ENCODE measurements at regions of chr5 and their contacts with region 1.

Region 1: DNA sequence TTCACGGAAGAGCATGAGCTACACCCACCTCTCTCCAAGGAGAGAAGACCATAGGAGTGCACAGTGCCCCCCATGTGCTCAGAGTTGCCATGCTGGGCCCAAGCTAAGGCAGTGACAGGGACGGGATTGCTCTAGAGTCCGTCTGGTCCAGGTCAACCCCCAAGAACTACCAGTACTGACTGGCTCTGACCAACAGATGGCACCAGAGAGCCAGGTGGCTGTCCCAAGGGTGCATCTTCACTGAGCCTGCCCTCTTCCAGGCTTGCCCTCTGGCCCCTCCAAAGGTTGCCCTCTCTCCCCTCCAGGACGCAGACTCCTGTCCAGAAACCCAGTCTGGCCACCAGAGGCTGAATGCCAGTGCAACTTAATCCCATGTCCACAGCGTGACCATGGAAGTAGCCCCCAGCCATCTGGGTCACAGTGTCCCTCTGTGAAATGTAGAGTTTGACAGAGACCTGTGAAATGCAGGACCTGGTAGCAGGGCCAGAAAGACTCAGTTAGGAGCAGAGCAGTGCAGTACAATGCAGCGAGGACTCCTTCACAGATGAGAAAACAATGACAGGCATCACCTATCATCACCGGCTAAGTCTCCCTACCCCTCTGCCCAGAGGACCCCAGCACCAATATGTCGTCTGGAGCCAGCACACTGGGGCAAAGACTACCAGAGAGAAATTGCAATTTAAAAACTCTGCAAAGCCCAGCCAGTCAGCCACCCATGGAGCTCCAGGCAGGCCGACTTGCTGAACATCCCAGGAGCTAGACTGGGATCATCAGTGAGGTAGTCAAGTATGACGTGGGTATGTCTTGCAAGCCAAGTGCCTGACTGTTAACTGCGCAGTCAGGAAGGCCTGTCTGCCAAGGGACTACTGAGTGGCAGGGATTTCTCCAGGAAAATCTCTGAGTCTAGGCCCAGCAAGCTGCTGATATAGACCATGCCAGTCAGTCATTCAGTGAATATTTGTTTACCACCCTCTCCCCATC is 7.7 kb upstream of the SKP1 start:
- DNase-seq: peak; percentile 64 to 84
- ATAC-seq: peak; percentile 91 to 94 (median 92)
- H3K4me3 ChIP-seq: no peak overlapping the region
- H3K27ac ChIP-seq: no peak overlapping the region
- H3K4me1 ChIP-seq: no peaks in the 10 kb centered on the region
- H3K27me3 ChIP-seq: no peaks in the 10 kb centered on the region
- CTCF ChIP-seq: peak; percentile 95

Region 2: GRCh38 chr5:134225618-134226440 is 41.4 kb after region 1 on chr5 and contains the start of gene PPP2CA:
- intact Hi-C with region 1: loop called in 1 of 2 experiments (anchors 5 kb)
- DNase-seq: peak; percentile 99 to 100
- ATAC-seq: peak; percentile 90 to 94 (median 92)
- H3K4me3 ChIP-seq: peak within 1 kb of the TSS; percentile 87
- H3K27ac ChIP-seq: peak within 1 kb of the TSS; percentile 100
- H3K4me1 ChIP-seq: peaks cover 43% of the 10 kb centered on the region
- H3K27me3 ChIP-seq: no peaks in the 10 kb centered on the region
- CTCF ChIP-seq: no peak
- total RNA-seq, gene PPP2CA: 107 to 140 (median 123) TPM

Region 3: DNA sequence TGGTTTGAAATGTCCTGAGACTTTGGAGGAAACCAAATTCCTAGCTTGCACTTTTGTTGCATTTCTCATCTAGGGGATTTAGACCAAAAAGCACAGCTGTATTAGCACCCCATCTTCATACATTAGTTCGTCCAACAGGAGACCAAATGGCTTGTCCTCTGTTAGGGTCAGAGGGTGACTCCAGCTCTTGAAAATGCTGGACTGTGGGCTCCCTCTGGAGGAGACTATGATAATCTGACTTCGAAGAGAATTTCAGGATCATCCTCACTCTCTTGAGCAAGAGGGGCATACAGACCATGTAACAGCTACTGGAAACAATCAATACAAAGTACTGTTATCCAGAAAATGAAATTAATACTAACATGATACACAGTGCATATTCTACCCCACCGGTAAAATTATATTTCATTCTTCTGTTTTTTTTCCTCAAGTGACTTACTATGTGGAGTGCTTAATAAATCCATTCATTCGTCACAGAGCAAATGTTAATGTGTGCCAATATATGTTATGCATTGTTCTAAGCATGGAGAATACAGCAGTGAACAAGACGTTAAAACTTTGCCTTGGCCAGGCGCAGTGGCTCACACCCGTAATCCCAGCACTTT is 105.2 kb after region 1 on chr5:
- intact Hi-C with region 1: loop called (anchors 1 to 2 kb)
- DNase-seq: peak in 1 of 2 donors; percentile 17
- ATAC-seq: peak; percentile 93 to 99 (median 98)
- H3K4me3 ChIP-seq: no peak overlapping the region
- H3K27ac ChIP-seq: no peak overlapping the region
- H3K4me1 ChIP-seq: peaks cover 5% of the 10 kb centered on the region
- H3K27me3 ChIP-seq: no peaks in the 10 kb centered on the region
- CTCF ChIP-seq: peak; percentile 84

Region 4: DNA sequence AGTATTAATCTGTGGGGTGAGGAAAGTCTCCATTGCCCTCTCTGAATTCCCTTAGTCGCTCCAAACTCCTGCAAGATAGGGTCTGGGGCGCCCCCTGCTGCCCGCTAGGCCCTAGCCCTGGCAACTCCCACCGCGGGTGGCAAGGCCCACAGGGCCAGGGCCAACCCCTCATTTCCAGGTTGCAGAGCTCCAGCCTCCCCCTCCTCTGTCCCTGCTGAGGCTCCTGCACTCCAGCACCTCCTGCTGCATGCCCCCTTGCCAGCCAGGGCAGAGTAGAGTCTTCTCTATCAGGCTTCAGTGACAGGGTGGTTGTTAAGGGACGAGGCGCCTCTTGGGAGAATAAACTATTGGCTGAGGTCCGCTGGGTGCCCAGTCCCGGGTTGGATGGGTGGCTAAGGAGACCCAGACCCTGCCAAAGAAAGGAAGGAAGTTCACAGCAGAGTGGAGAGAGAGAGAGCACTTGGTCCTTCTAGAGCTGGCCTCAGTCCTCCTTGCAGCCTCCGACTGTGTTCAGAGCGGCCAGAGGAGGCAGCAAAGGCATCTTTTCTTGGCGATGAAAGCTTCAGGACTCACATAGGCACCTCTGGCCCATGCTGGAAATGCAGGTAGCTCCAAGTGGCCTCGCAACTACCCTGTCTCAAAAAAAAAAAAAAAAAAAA is 402.6 kb after region 1 on chr5:
- intact Hi-C with region 1: loop called in 1 of 2 experiments (anchors 10 kb)
- DNase-seq: peak; percentile 85 to 90
- ATAC-seq: peak; percentile 73 to 83 (median 79)
- H3K4me3 ChIP-seq: no peak overlapping the region
- H3K27ac ChIP-seq: peak overlapping the region; percentile 30
- H3K4me1 ChIP-seq: peaks cover 31% of the 10 kb centered on the region
- H3K27me3 ChIP-seq: no peaks in the 10 kb centered on the region
- CTCF ChIP-seq: peak; percentile 64

Region 5: GRCh38 chr5:135139381-135140137 is 955.1 kb after region 1 on chr5:
- intact Hi-C with region 1: no loop called
- DNase-seq: no peak
- ATAC-seq: peak; percentile 53 to 72 (median 64)
- H3K4me3 ChIP-seq: no peak overlapping the region
- H3K27ac ChIP-seq: no peak overlapping the region
- H3K4me1 ChIP-seq: peaks cover 18% of the 10 kb centered on the region
- H3K27me3 ChIP-seq: no peaks in the 10 kb centered on the region
- CTCF ChIP-seq: no peak